ENCODE measurements at regions of chr14 and their contacts with region 1.

Region 1: GRCh38 chr14:105666420-105666819 is 140.0 kb downstream of the TMEM121 start:
- DNase-seq: no peak
- H3K4me3 Mint-ChIP-seq: no peak overlapping the region
- H3K27ac Mint-ChIP-seq: no peak overlapping the region
- H3K4me1 Mint-ChIP-seq: no peaks in the 10 kb centered on the region
- H3K27me3 Mint-ChIP-seq: no peaks in the 10 kb centered on the region

Region 2: DNA sequence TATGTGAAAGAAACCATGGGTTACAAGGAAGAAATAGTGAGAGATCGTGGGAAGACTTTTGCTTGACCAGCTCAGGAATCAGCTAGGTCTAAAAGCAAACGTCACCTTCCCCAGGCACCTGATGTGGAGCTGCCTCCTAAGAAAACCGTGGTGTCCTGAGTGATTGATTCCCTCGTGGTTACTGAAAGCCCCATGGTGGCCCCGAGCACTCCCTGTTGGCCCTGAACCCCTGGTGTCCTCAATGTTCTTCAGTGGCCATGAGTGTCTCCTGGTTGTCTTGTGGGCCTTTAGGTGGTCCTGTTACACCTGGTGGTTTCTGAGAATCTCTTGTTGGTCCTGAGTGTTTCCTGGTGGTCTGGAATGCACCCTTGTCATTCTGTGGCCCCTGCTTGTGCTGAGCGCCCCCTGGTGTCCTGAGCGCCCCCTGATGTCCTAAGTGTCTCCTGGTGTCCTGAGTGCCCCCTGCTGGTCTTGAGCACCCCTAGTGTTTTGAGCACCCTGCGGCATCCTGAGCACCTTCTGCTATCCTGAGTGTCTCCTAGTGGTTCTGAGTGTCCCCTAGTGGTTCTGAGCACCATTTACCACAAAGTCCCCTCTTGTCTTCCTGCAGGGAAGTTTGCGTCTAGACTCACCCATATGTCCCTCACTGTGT is 378.7 kb after region 1 on chr14:
- intact Hi-C with region 1: loop called (anchors 10 kb)
- DNase-seq: peak; percentile 69
- H3K4me3 Mint-ChIP-seq: no peak overlapping the region
- H3K27ac Mint-ChIP-seq: no peak overlapping the region
- H3K4me1 Mint-ChIP-seq: peaks cover 3% of the 10 kb centered on the region
- H3K27me3 Mint-ChIP-seq: peaks cover 8% of the 10 kb centered on the region

Measured in activated T-helper 2 cell treated with anti-CD3 and anti-CD28 coated beads, Interferon-gamma antibody, Interleukin-2, Interleukin-4, amounts not matched to agents 10 μg/mL and 5 μg/mL and 100 μg/mL, durations not matched to agents 14 hours and 24 hours and 36 hours (primary cell).